Right ventricle myocardium inferior (tissue), 1 donor: ENCODE measurements at regions of chr5 and their contacts with region 1.

Region 1: DNA sequence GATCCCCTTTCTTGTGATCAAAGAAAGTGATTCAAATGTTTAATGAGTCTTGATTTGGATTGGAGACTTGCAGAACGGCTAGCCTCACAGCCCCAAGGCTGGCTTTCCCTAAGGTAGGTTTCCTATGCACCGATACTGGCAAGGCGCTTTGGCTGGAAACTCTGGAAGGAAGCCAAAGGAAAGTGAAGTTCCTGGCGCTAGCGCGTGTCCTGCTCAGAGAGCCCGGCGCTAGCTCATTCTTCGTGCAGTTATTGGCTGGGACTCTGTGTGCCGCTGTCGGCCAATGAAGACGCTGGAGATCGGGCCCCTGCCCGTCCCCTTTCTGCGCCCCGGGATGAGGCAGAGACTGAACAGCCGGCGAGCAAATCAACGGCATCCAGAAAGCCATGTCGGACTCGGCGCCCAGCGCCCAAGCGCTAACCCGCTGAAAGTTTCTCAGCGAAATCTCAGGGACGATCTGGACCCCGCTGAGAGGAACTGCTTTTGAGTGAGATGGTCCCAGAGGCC is at the start of gene PCDHGC3:
- DNase-seq: peak; percentile 94
- ATAC-seq: peak; percentile 99
- total RNA-seq, gene PCDHGC3: 22.5 TPM

Region 2: DNA sequence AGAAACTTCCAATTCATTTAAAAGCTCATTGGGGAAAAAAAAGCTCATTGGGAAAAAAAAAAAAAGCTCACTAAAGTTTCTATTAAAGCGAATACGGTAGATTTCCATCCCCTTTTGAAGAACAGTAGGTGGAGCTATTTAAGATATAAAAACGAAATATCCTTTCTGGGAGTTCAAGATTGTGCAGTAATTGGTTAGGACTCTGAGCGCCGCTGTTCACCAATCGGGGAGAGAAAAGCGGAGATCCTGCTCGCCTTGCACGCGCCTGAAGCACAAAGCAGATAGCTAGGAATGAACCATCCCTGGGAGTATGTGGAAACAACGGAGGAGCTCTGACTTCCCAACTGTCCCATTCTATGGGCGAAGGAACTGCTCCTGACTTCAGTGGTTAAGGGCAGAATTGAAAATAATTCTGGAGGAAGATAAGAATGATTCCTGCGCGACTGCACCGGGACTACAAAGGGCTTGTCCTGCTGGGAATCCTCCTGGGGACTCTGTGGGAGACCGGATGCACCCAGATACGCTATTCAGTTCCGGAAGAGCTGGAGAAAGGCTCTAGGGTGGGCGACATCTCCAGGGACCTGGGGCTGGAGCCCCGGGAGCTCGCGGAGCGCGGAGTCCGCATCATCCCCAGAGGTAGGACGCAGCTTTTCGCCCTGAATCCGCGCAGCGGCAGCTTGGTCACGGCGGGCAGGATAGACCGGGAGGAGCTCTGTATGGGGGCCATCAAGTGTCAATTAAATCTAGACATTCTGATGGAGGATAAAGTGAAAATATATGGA is 45.2 kb before region 1 on chr5 and contains the start of gene PCDHGA12:
- intact Hi-C with region 1: loop called (anchors 5 kb)
- DNase-seq: no peak
- ATAC-seq: peak; percentile 90
- total RNA-seq, gene PCDHGA12: 6.5 TPM

Region 3: DNA sequence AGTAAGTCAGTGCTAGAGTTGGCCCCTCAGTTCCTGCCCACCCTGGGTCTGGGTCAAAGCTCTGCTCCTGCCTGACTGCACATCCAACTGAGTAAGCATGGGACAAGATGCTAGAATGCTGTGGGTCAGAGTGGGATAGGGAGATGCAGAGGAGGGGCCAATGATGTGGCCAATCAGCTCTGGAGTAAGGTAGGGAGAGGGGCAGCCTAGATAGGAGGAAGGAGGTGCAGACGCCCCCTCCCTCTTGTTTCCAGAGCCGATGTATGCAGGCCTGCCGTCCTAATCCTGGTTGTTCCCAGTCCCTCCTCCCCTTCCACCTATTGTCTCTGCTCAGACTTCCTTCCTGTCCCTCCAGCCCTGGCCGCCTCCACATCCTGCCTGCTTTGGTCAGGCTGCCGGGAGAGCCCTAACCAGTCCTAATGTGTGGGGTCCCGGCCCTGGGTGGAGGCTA is 205.1 kb after region 1 on chr5:
- intact Hi-C with region 1: no loop called
- DNase-seq: no peak
- ATAC-seq: peak; percentile 23